Psoas muscle (tissue), 8 donors: ENCODE measurements at regions of chr7 and their contacts with region 1.

Region 1: DNA sequence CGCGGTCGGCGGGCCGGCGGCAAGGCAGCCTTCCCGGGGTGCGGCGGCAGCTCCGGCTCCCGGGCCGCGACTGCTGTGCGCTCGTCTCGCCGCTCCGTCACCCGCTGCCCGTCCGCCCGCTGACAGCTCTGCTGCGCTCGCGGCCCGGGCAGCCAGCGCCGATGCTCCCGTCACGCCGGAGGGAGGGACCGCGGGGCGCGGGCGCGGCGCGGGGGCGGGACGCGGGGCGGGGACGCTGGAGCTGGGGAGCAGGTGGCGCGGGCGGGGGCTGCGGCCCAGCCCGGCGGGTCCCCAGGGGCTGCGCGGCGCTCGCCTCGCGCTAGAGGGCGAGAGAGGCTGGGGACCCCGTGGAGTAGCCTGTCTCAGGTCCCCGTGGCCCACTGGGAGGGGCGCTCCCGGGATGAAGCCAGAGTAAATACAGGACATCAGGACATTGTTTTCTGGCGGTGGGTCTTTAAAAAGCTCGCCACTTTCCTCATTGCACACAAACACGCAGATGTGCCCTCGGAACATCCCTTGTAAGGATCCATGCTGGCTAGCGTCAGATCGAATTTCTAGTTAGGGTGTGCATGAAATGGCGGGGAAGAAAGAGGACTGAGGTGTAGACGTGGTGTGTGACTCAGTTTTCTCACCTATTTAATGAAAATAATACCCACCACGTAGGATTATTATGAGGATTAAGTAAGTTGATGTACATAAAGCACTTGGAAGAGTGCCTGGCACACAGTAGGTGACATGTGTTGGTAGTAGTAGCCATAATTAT is at the start of gene ELAPOR2:
- DNase-seq: peak; percentile 82 to 87
- ATAC-seq: peak; percentile 96 to 99 (median 98)
- H3K4me3 ChIP-seq: peak within 1 kb of the TSS; percentile 82
- H3K27ac ChIP-seq: peak within 1 kb of the TSS; percentile 73
- H3K4me1 ChIP-seq: peaks cover 10% of the 10 kb centered on the region
- H3K27me3 ChIP-seq: no peaks in the 10 kb centered on the region
- CTCF ChIP-seq: peak; percentile 60
- total RNA-seq, gene ELAPOR2: 3.3 to 15.9 (median 6.9) TPM

Region 2: DNA sequence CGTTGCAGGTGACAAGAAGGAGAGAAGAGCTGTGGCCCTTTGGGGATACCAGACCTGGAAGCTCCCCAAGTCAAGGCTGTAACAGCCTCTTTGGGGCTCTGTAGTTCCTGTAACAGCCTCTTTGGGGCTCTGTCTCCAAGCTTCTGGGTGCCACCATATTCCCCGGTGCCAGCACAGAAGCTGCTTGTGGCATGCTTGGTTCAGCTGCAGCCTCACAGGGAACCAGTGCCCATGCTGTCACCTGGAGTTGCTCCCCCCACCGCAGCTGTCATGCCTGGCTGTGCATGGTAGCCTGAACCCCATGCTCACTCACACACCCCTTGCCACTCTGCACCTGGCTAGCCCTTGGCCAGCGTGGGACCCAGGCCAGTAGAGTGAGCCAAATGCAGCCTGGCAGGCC is 109.3 kb before region 1 on chr7:
- intact Hi-C with region 1: loop called in 1 of 2 experiments (anchors 5 kb)
- DNase-seq: no peak
- ATAC-seq: peak in 3 of 4 donors; percentile 73 to 79 (median 78)
- H3K4me3 ChIP-seq: no peak overlapping the region
- H3K27ac ChIP-seq: no peak overlapping the region
- H3K4me1 ChIP-seq: no peaks in the 10 kb centered on the region
- H3K27me3 ChIP-seq: no peaks in the 10 kb centered on the region
- CTCF ChIP-seq: no peak

Region 3: GRCh38 chr7:87152107-87152844 is 92.6 kb after region 1 on chr7 and contains the start of gene DMTF1:
- intact Hi-C with region 1: loop called in 1 of 2 experiments (anchors 5 kb)
- DNase-seq: peak; percentile 95 to 98
- ATAC-seq: peak; percentile 94 to 98 (median 96)
- H3K4me3 ChIP-seq: peak within 1 kb of the TSS; percentile 78
- H3K27ac ChIP-seq: peak within 1 kb of the TSS; percentile 96
- H3K4me1 ChIP-seq: peaks cover 55% of the 10 kb centered on the region
- H3K27me3 ChIP-seq: no peaks in the 10 kb centered on the region
- CTCF ChIP-seq: no peak
- total RNA-seq, gene DMTF1: 12.5 to 25.3 (median 20.5) TPM